ENCODE measurements at regions of chr17 and their contacts with region 1.

Region 1: DNA sequence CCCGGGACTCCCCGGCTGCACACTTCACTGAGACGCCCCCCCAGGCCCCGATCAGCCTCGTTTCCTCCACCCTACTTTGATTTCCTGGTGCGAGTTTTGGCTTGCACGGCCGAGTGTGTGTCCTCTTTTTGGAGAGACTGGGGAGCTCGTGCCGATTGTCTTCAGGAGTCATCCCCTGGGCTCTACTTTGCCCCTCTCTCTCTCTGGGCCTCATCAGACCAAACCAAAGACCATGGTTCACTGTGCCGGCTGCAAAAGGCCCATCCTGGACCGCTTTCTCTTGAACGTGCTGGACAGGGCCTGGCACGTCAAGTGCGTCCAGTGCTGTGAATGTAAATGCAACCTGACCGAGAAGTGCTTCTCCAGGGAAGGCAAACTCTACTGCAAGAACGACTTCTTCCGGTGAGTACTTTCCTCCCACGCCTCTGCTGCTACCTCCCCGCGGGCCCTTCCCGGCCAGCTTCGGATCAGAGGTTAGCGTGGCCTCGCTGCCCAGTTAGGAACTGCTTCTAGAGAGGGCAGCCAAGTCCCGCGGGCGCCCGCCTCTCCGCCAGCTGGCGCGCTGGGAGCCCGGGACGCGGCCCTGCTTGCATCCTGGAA is 791 bp downstream of the LHX1 start:
- DNase-seq: no peak
- ATAC-seq: no peak
- H3K4me3 Mint-ChIP-seq: peak overlapping the region; percentile 56
- H3K27ac Mint-ChIP-seq: peak overlapping the region; percentile 57
- H3K4me1 Mint-ChIP-seq: peaks cover 66% of the 10 kb centered on the region
- H3K27me3 Mint-ChIP-seq: peaks cover 80% of the 10 kb centered on the region

Region 2: GRCh38 chr17:36911007-36911406 is 27.1 kb before region 1 on chr17:
- CTCF ChIA-PET with region 1: no interaction called
- POLR2A ChIA-PET with region 1: no interaction called
- DNase-seq: no peak
- ATAC-seq: no peak
- H3K4me3 Mint-ChIP-seq: no peak overlapping the region
- H3K27ac Mint-ChIP-seq: no peak overlapping the region
- H3K4me1 Mint-ChIP-seq: no peaks in the 10 kb centered on the region
- H3K27me3 Mint-ChIP-seq: peaks cover 27% of the 10 kb centered on the region

Region 3: DNA sequence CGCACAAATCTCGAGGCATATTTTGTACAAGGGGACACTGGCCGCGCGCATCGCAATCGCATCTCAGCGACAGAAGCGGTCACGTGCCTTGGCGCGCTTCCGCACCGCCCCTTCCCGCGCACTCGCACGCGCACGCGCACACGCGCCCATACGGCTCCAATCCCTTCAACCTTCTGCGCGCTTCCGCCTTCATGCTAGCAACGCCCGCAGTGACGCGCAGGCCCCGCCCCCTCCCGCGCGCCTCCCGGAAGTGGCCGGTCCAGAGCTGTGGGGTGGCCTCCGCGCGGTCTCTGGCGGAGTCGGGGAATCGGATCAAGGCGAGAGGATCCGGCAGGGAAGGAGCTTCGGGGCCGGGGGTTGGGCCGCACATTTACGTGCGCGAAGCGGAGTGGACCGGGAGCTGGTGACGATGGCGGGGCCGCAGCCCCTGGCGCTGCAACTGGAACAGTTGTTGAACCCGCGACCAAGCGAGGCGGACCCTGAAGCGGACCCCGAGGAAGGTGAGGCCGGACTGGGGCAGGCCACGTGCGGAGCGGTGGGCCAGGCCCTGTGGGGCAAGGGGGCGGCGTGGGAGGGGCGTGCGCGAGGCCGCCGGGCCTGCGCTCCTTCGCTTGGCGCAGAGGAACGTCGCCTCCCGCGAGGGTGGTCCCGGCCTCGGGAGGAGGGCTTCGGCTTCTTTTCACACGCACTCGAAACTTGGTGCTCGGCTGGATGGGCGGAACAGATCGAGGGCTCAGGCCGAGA is 10.8 kb after region 1 on chr17 and contains the start of gene AATF:
- CTCF ChIA-PET with region 1: no interaction called
- POLR2A ChIA-PET with region 1: interaction called, 10 read pairs
- DNase-seq: peak; percentile 97
- ATAC-seq: peak; percentile 96
- H3K4me3 Mint-ChIP-seq: peak within 1 kb of the TSS; percentile 96
- H3K27ac Mint-ChIP-seq: peak within 1 kb of the TSS; percentile 98
- H3K4me1 Mint-ChIP-seq: peaks cover 59% of the 10 kb centered on the region
- H3K27me3 Mint-ChIP-seq: peaks cover 32% of the 10 kb centered on the region
- total RNA-seq, gene AATF: 69.8 to 72.9 TPM

Measured in activated CD8-positive, alpha-beta T cell treated with anti-CD3 and anti-CD28 coated beads, Interleukin-2, amount 10 ng/mL, durations not matched to agents 7 days and 5 days (primary cell).